CD4-positive, alpha-beta memory T cell (primary cell): ENCODE measurements at regions of chr16 and their contacts with region 1.

Region 1: GRCh38 chr16:80500526-80500925 is 40.3 kb upstream of the DYNLRB2 start:
- DNase-seq: no peak
- H3K4me3 ChIP-seq: no peak overlapping the region
- H3K4me3 Mint-ChIP-seq: no peak overlapping the region
- H3K27ac ChIP-seq: no peak overlapping the region
- H3K27ac Mint-ChIP-seq: no peak overlapping the region
- H3K4me1 ChIP-seq: no peaks in the 10 kb centered on the region
- H3K4me1 Mint-ChIP-seq: peaks cover 0 to 5% (median 1%) of the 10 kb centered on the region in 4 donors
- H3K27me3 ChIP-seq: no peaks in the 10 kb centered on the region
- H3K27me3 Mint-ChIP-seq: peaks cover 0 to 2% of the 10 kb centered on the region in 2 donors

Region 2: GRCh38 chr16:80526425-80527061 is 26.0 kb after region 1 on chr16:
- CTCF ChIA-PET with region 1: interaction called, 18 read pairs
- POLR2A ChIA-PET with region 1: no interaction called
- intact Hi-C with region 1: loop called (anchors 1 kb)
- DNase-seq: peak; percentile 53 to 66 (median 62)
- H3K4me3 ChIP-seq: no peak overlapping the region
- H3K4me3 Mint-ChIP-seq: no peak overlapping the region
- H3K27ac ChIP-seq: no peak overlapping the region
- H3K27ac Mint-ChIP-seq: peak overlapping the region in 1 of 7 donors; percentile 18
- H3K4me1 ChIP-seq: peaks cover 6% of the 10 kb centered on the region
- H3K4me1 Mint-ChIP-seq: peaks cover 0 to 4% (median 2%) of the 10 kb centered on the region in 4 donors
- H3K27me3 ChIP-seq: no peaks in the 10 kb centered on the region
- H3K27me3 Mint-ChIP-seq: no peaks in the 10 kb centered on the region

Region 3: DNA sequence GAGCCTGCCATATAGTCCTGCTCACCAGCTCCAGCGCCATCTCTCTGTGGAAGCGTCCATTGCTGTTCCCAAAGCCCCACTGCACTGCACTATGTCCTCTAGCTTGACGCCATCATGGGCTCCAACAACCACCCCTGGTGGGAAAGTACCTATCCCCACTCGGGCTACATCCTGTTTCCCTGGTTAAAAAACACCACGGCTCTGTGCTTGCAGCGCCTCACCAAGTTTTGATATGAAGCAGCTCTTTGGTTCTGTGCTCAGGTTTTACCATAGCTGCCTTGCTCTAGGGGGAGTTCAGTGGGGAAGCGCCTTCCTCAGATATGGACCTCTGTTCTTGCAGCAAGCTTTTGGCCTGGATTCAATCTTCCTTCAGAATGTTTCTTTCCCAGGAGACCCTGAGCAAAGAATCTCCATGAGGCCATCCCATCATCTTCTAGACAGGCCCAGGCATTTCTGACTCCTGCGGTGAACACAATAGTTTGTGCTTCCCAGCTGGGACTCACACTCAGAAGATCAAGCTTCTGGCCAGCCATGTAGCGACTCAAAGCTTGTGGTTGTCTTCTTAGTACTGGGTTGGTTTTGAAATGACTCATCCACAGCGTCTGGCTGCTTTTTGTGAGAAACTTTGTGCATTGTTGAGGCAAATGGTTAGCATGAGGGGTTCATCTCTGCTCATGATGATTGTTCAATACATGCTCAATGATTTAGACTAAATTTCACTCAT is 79.7 kb after region 1 on chr16:
- CTCF ChIA-PET with region 1: no interaction called
- POLR2A ChIA-PET with region 1: no interaction called
- intact Hi-C with region 1: no loop called
- DNase-seq: peak; percentile 55 to 81 (median 64)
- H3K4me3 ChIP-seq: peak overlapping the region in 1 of 2 donors; percentile 22
- H3K4me3 Mint-ChIP-seq: peak overlapping the region; percentile 39 to 84 (median 64)
- H3K27ac ChIP-seq: peak overlapping the region; percentile 7
- H3K27ac Mint-ChIP-seq: peak overlapping the region; percentile 86 to 96 (median 92)
- H3K4me1 ChIP-seq: peaks cover 46% of the 10 kb centered on the region
- H3K4me1 Mint-ChIP-seq: peaks cover 26 to 56% (median 38%) of the 10 kb centered on the region in 4 donors
- H3K27me3 ChIP-seq: no peaks in the 10 kb centered on the region
- H3K27me3 Mint-ChIP-seq: no peaks in the 10 kb centered on the region